MCF 10A (cell line): ENCODE measurements at regions of chr10 and their contacts with region 1.

Region 1: DNA sequence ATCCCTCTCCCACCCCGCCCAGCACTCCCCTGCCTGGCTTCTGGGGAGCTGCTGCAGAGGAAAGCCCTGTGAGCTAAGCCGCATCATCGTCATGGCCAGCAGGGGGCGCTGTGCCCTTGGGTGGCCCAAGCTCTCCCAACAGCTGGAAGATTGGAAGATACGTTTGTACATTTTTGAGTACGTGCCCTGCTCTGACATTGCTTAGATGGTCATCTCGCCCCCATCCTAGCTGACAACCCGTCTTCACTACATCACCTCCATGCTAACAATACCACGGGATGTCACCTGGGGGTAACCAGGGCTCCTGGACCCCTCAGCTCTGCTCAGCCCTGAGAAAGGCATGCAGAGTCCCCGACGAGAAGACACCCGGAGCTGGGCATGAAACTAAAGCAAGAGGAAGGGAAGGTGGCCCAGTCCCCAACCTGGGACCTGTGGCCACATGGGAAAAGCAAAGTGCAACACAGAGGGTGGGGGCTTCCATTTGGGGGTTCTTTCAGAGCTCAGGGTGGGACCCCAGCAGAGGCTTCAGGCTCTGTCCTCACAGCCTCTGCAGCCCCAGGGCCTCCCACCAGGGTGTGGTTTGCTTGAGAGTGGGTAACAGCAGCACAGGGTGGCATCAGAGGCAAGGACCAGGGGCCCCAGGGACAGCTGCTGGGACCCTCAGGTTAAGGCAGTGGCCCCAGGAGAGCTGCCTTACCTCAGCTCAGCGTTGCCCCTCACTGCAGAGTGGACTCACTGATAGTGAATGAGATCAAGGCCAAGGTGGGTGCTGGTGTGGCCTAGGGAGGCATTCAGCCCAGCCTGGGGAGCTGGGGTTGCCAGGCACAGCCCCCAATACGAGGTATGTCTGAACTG is 136.7 kb downstream of the PTPN20 start:
- DNase-seq: peak; percentile 74
- H3K4me3 Mint-ChIP-seq: no peak overlapping the region
- H3K27ac Mint-ChIP-seq: peak overlapping the region; percentile 55
- H3K4me1 Mint-ChIP-seq: no peaks in the 10 kb centered on the region
- H3K27me3 Mint-ChIP-seq: peaks cover 12% of the 10 kb centered on the region
- CTCF ChIP-seq: peak; percentile 94

Region 2: DNA sequence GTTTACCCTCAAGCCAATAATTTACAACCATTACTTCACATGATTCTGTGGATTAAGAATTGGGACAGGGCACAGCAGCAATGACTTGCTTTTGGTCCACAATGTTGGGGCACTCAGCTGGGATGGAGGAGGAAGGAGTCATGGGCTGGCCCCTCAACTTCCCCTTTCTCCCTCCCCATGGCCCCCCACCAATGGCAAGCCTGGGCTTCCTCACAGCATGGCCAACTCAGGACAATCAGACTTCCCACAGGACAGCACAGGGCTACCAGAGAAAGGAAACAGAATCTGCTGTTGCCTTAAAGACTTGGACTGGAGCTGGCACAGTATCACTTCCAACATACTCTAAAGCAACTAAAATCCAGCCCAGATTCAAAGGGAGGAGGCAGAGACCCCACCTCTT is 24.0 kb after region 1 on chr10:
- CTCF ChIA-PET with region 1: interaction called, 17 read pairs
- POLR2A ChIA-PET with region 1: no interaction called
- intact Hi-C with region 1: no loop called
- DNase-seq: no peak
- H3K4me3 Mint-ChIP-seq: no peak overlapping the region
- H3K27ac Mint-ChIP-seq: no peak overlapping the region
- H3K4me1 Mint-ChIP-seq: no peaks in the 10 kb centered on the region
- H3K27me3 Mint-ChIP-seq: peaks cover 53% of the 10 kb centered on the region
- CTCF ChIP-seq: no peak

Region 3: DNA sequence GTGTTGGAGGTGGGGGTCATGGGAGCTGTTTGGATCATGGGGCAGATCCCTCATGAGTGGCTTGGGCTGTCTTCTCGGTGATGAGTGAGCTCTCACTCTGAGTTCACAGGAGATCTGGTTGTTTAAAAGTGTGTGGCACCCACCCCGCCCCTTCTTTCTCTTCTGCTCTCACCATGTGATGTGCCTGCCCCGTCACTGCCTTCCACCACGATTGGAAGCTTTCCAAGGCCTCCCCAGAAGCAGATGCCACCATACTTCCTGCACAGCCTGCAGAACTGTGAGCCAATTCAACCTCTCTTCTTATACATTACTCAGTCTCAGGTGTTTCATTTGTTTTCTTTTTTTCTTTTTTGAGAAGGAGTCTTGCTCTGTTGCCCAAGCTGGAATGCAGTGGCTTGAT is 33.4 kb after region 1 on chr10:
- CTCF ChIA-PET with region 1: interaction called, 11 read pairs
- POLR2A ChIA-PET with region 1: no interaction called
- intact Hi-C with region 1: no loop called
- DNase-seq: no peak
- H3K4me3 Mint-ChIP-seq: no peak overlapping the region
- H3K27ac Mint-ChIP-seq: no peak overlapping the region
- H3K4me1 Mint-ChIP-seq: no peaks in the 10 kb centered on the region
- H3K27me3 Mint-ChIP-seq: peaks cover 11% of the 10 kb centered on the region
- CTCF ChIP-seq: no peak

Region 4: GRCh38 chr10:47101807-47102206 is 53.9 kb after region 1 on chr10:
- CTCF ChIA-PET with region 1: no interaction called
- POLR2A ChIA-PET with region 1: no interaction called
- intact Hi-C with region 1: no loop called
- DNase-seq: no peak
- H3K4me3 Mint-ChIP-seq: no peak overlapping the region
- H3K27ac Mint-ChIP-seq: no peak overlapping the region
- H3K4me1 Mint-ChIP-seq: no peaks in the 10 kb centered on the region
- H3K27me3 Mint-ChIP-seq: no peaks in the 10 kb centered on the region
- CTCF ChIP-seq: no peak

Region 5: GRCh38 chr10:47278720-47279119 is 230.8 kb after region 1 on chr10:
- CTCF ChIA-PET with region 1: interaction called, 10 read pairs
- POLR2A ChIA-PET with region 1: no interaction called
- intact Hi-C with region 1: no loop called
- DNase-seq: no peak
- H3K4me3 Mint-ChIP-seq: no peak overlapping the region
- H3K27ac Mint-ChIP-seq: no peak overlapping the region
- H3K4me1 Mint-ChIP-seq: no peaks in the 10 kb centered on the region
- H3K27me3 Mint-ChIP-seq: peaks cover 45% of the 10 kb centered on the region
- CTCF ChIP-seq: no peak